Activated T-helper 1 cell treated with anti-CD3 and anti-CD28 coated beads, Interleukin-12 subunit alpha, Interleukin-12 subunit beta, Interleukin-2, Interleukin-4 antibody, amounts not matched to agents 30 ng/mL and 10 ng/mL and 1 ng/mL, durations not matched to agents 14 hours and 24 hours and 36 hours (primary cell): ENCODE measurements at regions of chr18 and their contacts with region 1.

Region 1: DNA sequence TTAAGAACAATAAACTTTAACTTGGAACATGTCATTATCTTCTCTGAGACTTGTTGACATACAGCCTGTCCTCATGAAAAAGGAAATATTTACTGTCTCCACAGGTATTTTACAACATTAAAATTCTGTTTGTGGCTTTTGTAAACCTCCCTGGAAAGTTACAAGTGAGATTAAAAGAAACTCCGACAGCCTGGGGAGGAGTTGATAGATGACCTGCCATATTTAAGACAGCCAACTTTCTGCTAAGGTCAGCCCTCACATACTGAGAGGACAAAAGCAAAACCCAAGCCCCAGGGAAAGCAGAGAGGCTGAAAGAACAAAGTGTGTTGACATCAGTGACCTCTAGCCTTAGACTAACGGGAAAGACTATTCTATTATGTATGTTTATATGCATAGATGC is 350.2 kb downstream of the RIT2 start:
- DNase-seq: no peak
- H3K4me3 Mint-ChIP-seq: no peak overlapping the region
- H3K27ac Mint-ChIP-seq: no peak overlapping the region
- H3K4me1 Mint-ChIP-seq: no peaks in the 10 kb centered on the region
- H3K27me3 Mint-ChIP-seq: no peaks in the 10 kb centered on the region

Region 2: DNA sequence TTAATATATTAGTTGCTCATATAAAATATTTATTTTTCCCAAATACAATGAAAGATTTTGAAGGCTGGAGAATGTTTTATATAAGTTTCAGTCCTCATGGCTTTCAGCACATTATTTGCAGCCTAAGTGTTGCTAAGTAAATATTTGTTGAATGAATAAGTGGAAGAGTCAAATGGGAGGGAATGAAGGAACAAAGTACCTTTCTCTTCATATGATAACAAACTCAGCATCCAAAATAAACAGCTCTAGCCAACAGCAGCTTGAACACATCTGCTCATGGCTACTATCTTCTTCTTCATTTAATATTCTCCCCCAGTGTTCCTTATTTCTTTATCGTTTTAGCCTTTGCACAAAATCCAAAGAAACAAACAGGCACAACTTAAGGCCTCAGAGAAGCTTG is 1195.4 kb before region 1 on chr18:
- intact Hi-C with region 1: no loop called
- DNase-seq: no peak
- H3K4me3 Mint-ChIP-seq: no peak overlapping the region
- H3K27ac Mint-ChIP-seq: no peak overlapping the region
- H3K4me1 Mint-ChIP-seq: no peaks in the 10 kb centered on the region
- H3K27me3 Mint-ChIP-seq: no peaks in the 10 kb centered on the region

Region 3: DNA sequence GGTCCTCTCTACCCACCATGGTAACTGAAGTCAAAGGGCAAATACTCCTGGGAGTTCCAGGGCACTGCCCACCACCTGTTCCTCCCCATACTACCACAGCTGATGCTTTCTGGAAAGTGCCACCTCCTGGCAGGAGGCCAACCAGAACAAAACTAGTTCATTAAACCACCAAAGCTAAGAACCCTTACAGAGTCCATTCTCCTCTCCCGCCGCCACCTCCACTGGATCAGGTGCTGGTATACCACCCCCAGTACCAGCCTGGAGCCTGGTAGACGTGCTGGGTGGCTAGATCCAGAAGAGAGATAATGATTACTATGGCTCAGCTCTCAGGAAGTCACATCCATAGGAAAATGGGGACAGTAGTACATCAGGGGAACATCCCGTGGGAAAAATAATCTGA is 49.3 kb after region 1 on chr18:
- intact Hi-C with region 1: loop called (anchors 2 kb)
- DNase-seq: no peak
- H3K4me3 Mint-ChIP-seq: no peak overlapping the region
- H3K27ac Mint-ChIP-seq: no peak overlapping the region
- H3K4me1 Mint-ChIP-seq: no peaks in the 10 kb centered on the region
- H3K27me3 Mint-ChIP-seq: no peaks in the 10 kb centered on the region